Endothelial cell of umbilical vein (primary cell): ENCODE measurements at regions of chr13 and their contacts with region 1.

Region 1: GRCh38 chr13:91203430-91203829 is 144.1 kb upstream of the MIR17HG start:
- DNase-seq: no peak
- H3K4me3 ChIP-seq: no peak overlapping the region
- H3K27ac ChIP-seq: no peak overlapping the region
- H3K4me1 ChIP-seq: no peaks in the 10 kb centered on the region
- H3K27me3 ChIP-seq: no peaks in the 10 kb centered on the region
- CTCF ChIP-seq: no peak
- POLR2A ChIP-seq: no peak

Region 2: GRCh38 chr13:90997951-90998350 is 205.5 kb before region 1 on chr13:
- CTCF ChIA-PET with region 1: no interaction called
- POLR2A ChIA-PET with region 1: no interaction called
- dilution Hi-C with region 1: no loop called
- intact Hi-C with region 1: no loop called
- DNase-seq: no peak
- H3K4me3 ChIP-seq: no peak overlapping the region
- H3K27ac ChIP-seq: no peak overlapping the region
- H3K4me1 ChIP-seq: no peaks in the 10 kb centered on the region
- H3K27me3 ChIP-seq: no peaks in the 10 kb centered on the region
- CTCF ChIP-seq: no peak
- POLR2A ChIP-seq: no peak

Region 3: DNA sequence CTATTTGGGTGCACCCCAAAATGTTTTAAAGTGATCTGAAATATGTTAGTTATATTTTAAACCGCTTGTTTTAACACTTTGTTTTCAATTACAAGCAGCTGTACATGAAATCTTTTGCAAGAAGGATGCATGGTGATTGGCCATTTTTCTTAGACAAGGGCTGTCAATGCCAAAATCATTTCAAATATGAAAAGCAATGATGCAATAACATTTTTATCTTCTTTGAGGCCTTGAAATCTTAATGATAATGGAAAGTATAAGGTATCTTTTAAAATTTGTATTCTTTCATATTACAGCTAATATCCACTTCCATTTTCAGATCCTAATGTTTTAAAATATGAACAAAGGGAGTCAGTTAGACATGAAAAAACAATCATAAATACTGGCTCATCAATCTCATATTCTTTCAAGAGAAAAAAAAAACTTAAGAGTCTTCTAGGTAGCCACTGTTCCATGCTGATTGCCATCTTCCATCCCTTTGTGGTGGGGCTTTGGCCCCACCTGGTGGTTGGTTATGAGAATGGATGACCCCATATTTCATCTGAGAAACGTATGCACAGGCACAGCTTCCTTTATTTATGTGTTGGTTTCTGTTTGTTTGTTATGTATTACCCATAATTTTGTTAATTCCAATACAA is 186.3 kb before region 1 on chr13:
- CTCF ChIA-PET with region 1: no interaction called
- POLR2A ChIA-PET with region 1: no interaction called
- dilution Hi-C with region 1: no loop called
- intact Hi-C with region 1: no loop called
- DNase-seq: peak; percentile 12
- H3K4me3 ChIP-seq: no peak overlapping the region
- H3K27ac ChIP-seq: no peak overlapping the region
- H3K4me1 ChIP-seq: no peaks in the 10 kb centered on the region
- H3K27me3 ChIP-seq: no peaks in the 10 kb centered on the region
- CTCF ChIP-seq: peak; percentile 69 to 72
- POLR2A ChIP-seq: no peak

Region 4: GRCh38 chr13:91111476-91112201 is 91.8 kb before region 1 on chr13:
- CTCF ChIA-PET with region 1: no interaction called
- POLR2A ChIA-PET with region 1: no interaction called
- dilution Hi-C with region 1: no loop called
- intact Hi-C with region 1: no loop called
- DNase-seq: no peak
- H3K4me3 ChIP-seq: no peak overlapping the region
- H3K27ac ChIP-seq: no peak overlapping the region
- H3K4me1 ChIP-seq: no peaks in the 10 kb centered on the region
- H3K27me3 ChIP-seq: no peaks in the 10 kb centered on the region
- CTCF ChIP-seq: no peak
- POLR2A ChIP-seq: no peak

Region 5: DNA sequence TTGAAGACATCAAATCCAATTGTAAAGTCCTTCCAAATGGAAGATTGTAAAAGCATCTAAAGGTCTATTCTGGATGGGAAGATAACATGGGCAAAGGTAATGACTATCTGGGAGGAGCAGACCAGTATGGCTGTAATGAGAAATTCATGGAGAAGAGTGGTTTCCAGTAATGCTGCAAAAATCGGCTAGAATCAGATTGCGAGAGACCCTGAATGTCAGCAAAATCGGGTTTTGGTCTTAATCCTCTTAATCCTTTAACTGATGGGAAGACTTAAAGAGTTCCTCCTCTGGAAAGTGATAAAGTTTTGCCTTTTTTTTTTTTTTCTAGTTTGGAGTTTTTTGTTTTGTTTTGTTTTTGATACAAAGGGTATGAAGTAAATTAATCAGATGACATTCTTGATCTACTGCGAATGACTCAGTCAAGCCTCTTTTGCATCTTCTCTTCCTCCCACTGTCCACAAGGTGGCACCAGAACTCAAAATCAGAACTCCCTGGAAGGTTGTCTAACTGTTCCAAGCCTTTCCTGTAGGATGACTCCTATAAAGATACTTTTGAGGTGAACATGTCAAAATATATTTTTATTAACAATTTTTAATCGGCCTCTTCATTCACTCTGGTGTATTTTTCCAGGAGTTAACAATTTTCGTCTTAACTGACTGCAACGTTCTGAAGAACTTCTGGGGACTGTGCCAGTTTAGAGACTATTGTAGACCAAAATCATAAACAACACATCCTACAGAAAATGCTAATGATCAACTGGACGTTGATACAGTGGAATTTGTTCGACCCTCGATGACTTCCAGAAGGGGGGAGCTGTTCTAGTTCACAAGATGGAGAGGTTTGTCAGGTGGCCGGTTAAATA is 69.3 kb before region 1 on chr13:
- CTCF ChIA-PET with region 1: no interaction called
- POLR2A ChIA-PET with region 1: no interaction called
- dilution Hi-C with region 1: no loop called
- intact Hi-C with region 1: no loop called
- DNase-seq: peak; percentile 63
- H3K4me3 ChIP-seq: no peak overlapping the region
- H3K27ac ChIP-seq: no peak overlapping the region
- H3K4me1 ChIP-seq: no peaks in the 10 kb centered on the region
- H3K27me3 ChIP-seq: peaks cover 0 to 2% of the 10 kb centered on the region in 2 experiments
- CTCF ChIP-seq: peak; percentile 69 to 73
- POLR2A ChIP-seq: no peak

Region 6: GRCh38 chr13:91647361-91647990 is 444.0 kb after region 1 on chr13:
- CTCF ChIA-PET with region 1: no interaction called
- POLR2A ChIA-PET with region 1: interaction called, 12 read pairs
- dilution Hi-C with region 1: no loop called
- intact Hi-C with region 1: no loop called
- DNase-seq: no peak
- H3K4me3 ChIP-seq: no peak overlapping the region
- H3K27ac ChIP-seq: no peak overlapping the region
- H3K4me1 ChIP-seq: no peaks in the 10 kb centered on the region
- H3K27me3 ChIP-seq: no peaks in the 10 kb centered on the region
- CTCF ChIP-seq: peak; percentile 17 to 21
- POLR2A ChIP-seq: no peak